Ascending aorta (tissue), 2 donors: ENCODE measurements at regions of chr12 and their contacts with region 1.

Region 1: DNA sequence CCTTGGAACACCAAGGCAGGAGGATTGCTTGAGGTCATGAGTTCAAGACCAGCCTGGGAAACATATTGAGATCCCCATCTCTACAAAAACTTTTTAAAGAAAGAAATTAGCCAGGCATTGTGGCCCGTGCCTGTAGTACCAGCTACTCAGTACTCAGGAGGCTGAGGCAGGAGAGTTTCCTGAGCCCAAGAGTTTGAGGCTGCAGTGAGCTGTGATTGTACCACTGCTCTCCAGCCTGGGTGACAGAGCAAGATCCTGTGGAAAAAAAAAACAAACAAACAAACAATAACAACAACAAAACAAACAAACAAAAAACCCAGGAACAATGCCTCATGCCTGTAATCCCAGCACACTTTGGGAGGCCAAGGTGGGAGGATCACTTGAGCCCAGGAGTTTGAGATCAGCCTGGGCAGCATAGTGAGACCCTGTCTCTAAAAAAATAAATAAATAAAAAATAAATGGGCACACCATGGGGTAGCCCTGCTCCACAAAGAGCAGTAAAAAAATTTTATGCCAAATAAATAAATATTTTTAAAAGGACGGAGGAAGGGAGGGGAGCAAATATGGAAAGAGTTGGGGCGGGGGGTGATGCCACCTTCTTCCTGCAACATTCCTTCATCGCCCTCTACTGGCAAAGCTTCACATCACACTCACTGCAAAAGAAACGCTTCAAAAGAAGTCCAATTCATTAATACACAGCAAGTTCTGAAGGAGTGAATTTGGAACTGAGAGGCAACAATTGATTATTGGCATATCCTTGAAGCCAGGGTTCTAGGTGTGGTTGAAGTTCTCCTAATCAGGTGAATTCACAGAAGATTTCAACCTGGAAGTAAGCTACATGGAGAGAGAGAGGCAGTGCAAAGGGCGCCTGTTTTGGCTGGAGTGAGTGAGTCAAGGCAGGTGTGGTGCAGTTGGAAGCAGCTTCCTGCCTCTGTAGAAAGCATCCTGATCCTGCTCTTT is 8.8 kb upstream of the GNPTAB start:
- DNase-seq: peak in 1 of 2 donors; percentile 79
- H3K4me3 ChIP-seq: no peak overlapping the region
- H3K27ac ChIP-seq: no peak overlapping the region
- H3K4me1 ChIP-seq: no peaks in the 10 kb centered on the region
- H3K27me3 ChIP-seq: no peaks in the 10 kb centered on the region
- CTCF ChIP-seq: peak; percentile 61 to 88 (median 83)

Region 2: DNA sequence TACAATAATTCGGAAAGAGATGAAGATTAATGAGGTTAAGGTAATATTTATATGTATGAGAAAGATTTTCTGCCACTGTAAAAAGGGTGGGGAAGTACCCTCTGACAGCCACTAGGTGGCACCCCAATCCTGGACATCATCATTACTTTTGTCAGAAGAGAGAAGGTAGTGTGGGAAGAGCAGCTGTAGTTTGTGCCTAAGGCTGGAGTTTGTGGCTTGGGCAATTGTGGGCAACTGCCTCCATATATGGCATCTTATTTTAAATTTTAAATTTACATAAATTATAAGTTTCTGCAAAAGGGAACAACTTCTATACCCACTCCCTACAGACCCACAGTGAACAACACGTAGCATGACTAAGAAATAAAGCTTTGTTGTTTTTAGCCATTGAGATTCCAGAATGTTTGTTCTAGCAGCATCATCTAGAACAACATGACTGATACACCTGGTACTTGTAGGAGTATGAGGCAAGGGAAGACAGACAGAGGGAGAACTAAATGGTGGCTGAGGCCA is 65.9 kb before region 1 on chr12:
- intact Hi-C with region 1: loop called (anchors 1 kb)
- DNase-seq: peak in 1 of 2 donors; percentile 70
- H3K4me3 ChIP-seq: no peak overlapping the region
- H3K27ac ChIP-seq: no peak overlapping the region
- H3K4me1 ChIP-seq: no peaks in the 10 kb centered on the region
- H3K27me3 ChIP-seq: no peaks in the 10 kb centered on the region
- CTCF ChIP-seq: peak; percentile 83 to 91 (median 87)